IMR-90 (cell line): ENCODE measurements at regions of chr14 and their contacts with region 1.

Region 1: DNA sequence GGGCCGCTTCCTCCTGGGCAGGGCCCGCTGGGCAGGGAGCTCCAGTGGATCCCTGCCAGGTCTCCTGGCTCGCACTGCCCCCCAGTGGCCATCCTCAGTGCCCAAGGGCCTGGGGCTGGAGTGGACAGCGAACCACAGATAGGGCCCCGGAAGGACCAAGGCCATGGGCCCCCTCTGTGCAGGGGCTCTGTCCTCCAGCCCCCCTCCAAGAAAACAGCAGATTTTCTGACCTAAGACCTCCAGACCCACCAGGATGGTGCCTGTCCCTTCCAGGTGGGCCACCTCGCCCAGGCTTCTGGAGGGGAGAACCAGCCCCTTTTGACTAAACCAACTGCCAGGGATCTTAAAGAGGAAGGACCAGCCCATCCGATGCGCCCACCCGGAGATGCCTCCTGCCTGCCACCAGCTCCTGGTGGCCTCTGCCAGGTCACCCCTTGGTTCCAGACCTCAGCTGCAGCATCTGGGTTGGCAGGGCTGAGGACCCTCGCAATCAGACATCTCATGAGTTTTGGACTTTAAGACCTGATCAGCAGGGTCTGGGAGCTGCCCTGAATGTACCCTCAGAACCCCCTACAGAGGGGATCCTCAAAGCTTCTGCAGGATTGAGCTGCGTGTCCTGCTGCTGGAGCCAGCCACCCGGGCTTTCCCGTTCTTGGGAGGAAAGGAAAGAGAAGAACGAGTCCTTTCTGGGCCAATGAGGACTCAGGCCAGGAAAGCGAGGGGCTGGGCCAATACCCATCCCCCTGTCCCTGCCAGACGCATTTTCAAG is 325.8 kb upstream of the DIO3 start:
- DNase-seq: peak; percentile 32
- ATAC-seq: peak; percentile 94
- H3K4me3 ChIP-seq: no peak overlapping the region
- H3K27ac ChIP-seq: no peak overlapping the region
- H3K4me1 ChIP-seq: no peaks in the 10 kb centered on the region
- H3K27me3 ChIP-seq: peaks cover 25% of the 10 kb centered on the region
- CTCF ChIP-seq: peak; percentile 73
- POLR2A ChIP-seq: no peak
- RAD21 ChIP-seq: peak; percentile 88

Region 2: GRCh38 chr14:100417466-100417865 is 818.1 kb before region 1 on chr14:
- CTCF ChIA-PET with region 1: no interaction called
- POLR2A ChIA-PET with region 1: no interaction called
- dilution Hi-C with region 1: no loop called
- in situ Hi-C with region 1: loop called (anchors 25 kb)
- intact Hi-C with region 1: loop called (anchors 1 kb)
- DNase-seq: peak; percentile 97
- ATAC-seq: peak; percentile 97
- H3K4me3 ChIP-seq: no peak overlapping the region
- H3K27ac ChIP-seq: 0 out of 2 replicates have a peak overlapping the region, but pooled peaks have one; percentile 5
- H3K4me1 ChIP-seq: peaks cover 10% of the 10 kb centered on the region
- H3K27me3 ChIP-seq: no peaks in the 10 kb centered on the region
- CTCF ChIP-seq: peak; percentile 96
- POLR2A ChIP-seq: peak; percentile 65
- RAD21 ChIP-seq: peak; percentile 98

Region 3: GRCh38 chr14:100662879-100663760 is 572.4 kb before region 1 on chr14:
- CTCF ChIA-PET with region 1: no interaction called
- POLR2A ChIA-PET with region 1: no interaction called
- dilution Hi-C with region 1: no loop called
- in situ Hi-C with region 1: no loop called
- intact Hi-C with region 1: loop called (anchors 5 kb)
- DNase-seq: peak; percentile 61
- ATAC-seq: no peak; the same call in 1 of the 2 replicates
- H3K4me3 ChIP-seq: no peak overlapping the region
- H3K27ac ChIP-seq: no peak overlapping the region
- H3K4me1 ChIP-seq: peaks cover 12% of the 10 kb centered on the region
- H3K27me3 ChIP-seq: peaks cover 21% of the 10 kb centered on the region
- CTCF ChIP-seq: peak; percentile 82
- POLR2A ChIP-seq: no peak
- RAD21 ChIP-seq: peak; percentile 79

Region 4: DNA sequence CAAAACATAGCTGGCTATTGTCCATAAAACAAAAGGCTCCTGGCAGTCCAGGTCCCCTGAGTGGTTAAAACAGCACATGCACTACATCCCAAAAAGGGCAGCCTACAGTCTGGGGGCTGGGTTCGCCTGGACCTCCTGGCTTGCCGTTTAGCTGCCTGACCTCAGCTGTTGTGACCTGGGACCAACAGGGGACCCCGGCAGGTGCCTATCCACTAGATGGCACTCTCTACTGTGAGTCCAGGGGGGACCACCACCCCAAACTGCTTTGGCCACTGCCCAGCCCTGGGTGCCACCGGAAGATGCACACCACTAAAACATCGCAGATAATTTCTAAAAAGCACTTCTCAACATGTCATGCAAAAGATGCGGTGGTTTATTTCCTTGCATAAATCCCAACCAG is 329.1 kb before region 1 on chr14:
- CTCF ChIA-PET with region 1: no interaction called
- POLR2A ChIA-PET with region 1: interaction called, 5 read pairs
- dilution Hi-C with region 1: no loop called
- in situ Hi-C with region 1: no loop called
- intact Hi-C with region 1: loop called (anchors 1 kb)
- DNase-seq: no peak
- ATAC-seq: no peak
- H3K4me3 ChIP-seq: no peak overlapping the region
- H3K27ac ChIP-seq: no peak overlapping the region
- H3K4me1 ChIP-seq: peaks cover 5% of the 10 kb centered on the region; the same call in 1 of the 2 replicates
- H3K27me3 ChIP-seq: peaks cover 11% of the 10 kb centered on the region; the same call in 1 of the 2 replicates
- CTCF ChIP-seq: 0 out of 2 replicates have a peak, but pooled peaks have one; percentile 13
- POLR2A ChIP-seq: no peak
- RAD21 ChIP-seq: peak; percentile 26; the same call in 1 of the 2 replicates

Region 5: GRCh38 chr14:101628471-101628966 is 393.0 kb after region 1 on chr14:
- CTCF ChIA-PET with region 1: no interaction called
- POLR2A ChIA-PET with region 1: no interaction called
- dilution Hi-C with region 1: no loop called
- in situ Hi-C with region 1: no loop called
- intact Hi-C with region 1: loop called (anchors 5 kb)
- DNase-seq: peak; percentile 36
- ATAC-seq: peak; percentile 99
- H3K4me3 ChIP-seq: peak overlapping the region; percentile 27
- H3K27ac ChIP-seq: no peak overlapping the region
- H3K4me1 ChIP-seq: no peaks in the 10 kb centered on the region
- H3K27me3 ChIP-seq: peaks cover 18% of the 10 kb centered on the region
- CTCF ChIP-seq: peak; percentile 93
- POLR2A ChIP-seq: no peak
- RAD21 ChIP-seq: peak; percentile 88

Region 6: GRCh38 chr14:102279688-102280348 is 1044.3 kb after region 1 on chr14:
- CTCF ChIA-PET with region 1: no interaction called
- POLR2A ChIA-PET with region 1: no interaction called
- dilution Hi-C with region 1: no loop called
- in situ Hi-C with region 1: no loop called
- intact Hi-C with region 1: no loop called
- DNase-seq: peak; percentile 100
- ATAC-seq: peak; percentile 88
- H3K4me3 ChIP-seq: no peak overlapping the region
- H3K27ac ChIP-seq: peak overlapping the region; percentile 86
- H3K4me1 ChIP-seq: peaks cover 12% of the 10 kb centered on the region
- H3K27me3 ChIP-seq: no peaks in the 10 kb centered on the region
- CTCF ChIP-seq: no peak
- POLR2A ChIP-seq: peak; percentile 54; the same call in 1 of the 2 replicates
- RAD21 ChIP-seq: no peak; the same call in 1 of the 2 replicates